ENCODE measurements at regions of chr4 and their contacts with region 1.

Region 1: DNA sequence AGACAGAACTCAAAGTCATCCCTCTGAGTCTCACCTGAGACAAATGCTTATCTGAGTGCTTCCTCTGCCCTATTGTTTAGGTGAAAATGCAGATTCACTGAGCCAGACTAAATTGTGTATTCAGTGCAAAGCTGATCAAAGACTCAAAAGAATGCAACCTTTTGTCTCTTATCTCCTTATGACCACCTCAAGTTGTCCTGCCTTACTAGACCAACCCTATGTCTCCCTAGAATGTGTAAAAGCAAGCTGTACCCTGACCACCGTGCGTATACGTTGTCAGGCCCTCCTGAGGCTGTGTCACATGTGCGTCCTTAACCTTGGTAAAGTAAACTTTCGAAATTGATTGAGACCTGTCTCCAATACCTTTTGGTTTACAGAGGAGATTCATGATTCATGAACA is 63.6 kb upstream of the SH3RF1 start:
- DNase-seq: peak; percentile 46 to 57
- H3K4me3 ChIP-seq: no peak overlapping the region
- H3K4me3 Mint-ChIP-seq: no peak overlapping the region
- H3K27ac Mint-ChIP-seq: peak overlapping the region; percentile 24
- H3K4me1 ChIP-seq: peaks cover 21% of the 10 kb centered on the region
- H3K4me1 Mint-ChIP-seq: peaks cover 32% of the 10 kb centered on the region
- H3K27me3 ChIP-seq: no peaks in the 10 kb centered on the region
- H3K27me3 Mint-ChIP-seq: no peaks in the 10 kb centered on the region
- CTCF ChIP-seq: no peak

Region 2: GRCh38 chr4:169225058-169225751 is 109.1 kb before region 1 on chr4:
- CTCF ChIA-PET with region 1: no interaction called
- POLR2A ChIA-PET with region 1: no interaction called
- intact Hi-C with region 1: no loop called
- DNase-seq: no peak
- H3K4me3 ChIP-seq: no peak overlapping the region
- H3K4me3 Mint-ChIP-seq: no peak overlapping the region
- H3K27ac Mint-ChIP-seq: no peak overlapping the region
- H3K4me1 ChIP-seq: peaks cover 16% of the 10 kb centered on the region
- H3K4me1 Mint-ChIP-seq: peaks cover 6% of the 10 kb centered on the region
- H3K27me3 ChIP-seq: no peaks in the 10 kb centered on the region
- H3K27me3 Mint-ChIP-seq: no peaks in the 10 kb centered on the region
- CTCF ChIP-seq: no peak

Region 3: GRCh38 chr4:169293343-169294176 is 40.8 kb before region 1 on chr4:
- CTCF ChIA-PET with region 1: no interaction called
- POLR2A ChIA-PET with region 1: no interaction called
- intact Hi-C with region 1: no loop called
- DNase-seq: no peak
- H3K4me3 ChIP-seq: no peak overlapping the region
- H3K4me3 Mint-ChIP-seq: no peak overlapping the region
- H3K27ac Mint-ChIP-seq: no peak overlapping the region
- H3K4me1 ChIP-seq: peaks cover 12% of the 10 kb centered on the region
- H3K4me1 Mint-ChIP-seq: peaks cover 12% of the 10 kb centered on the region
- H3K27me3 ChIP-seq: no peaks in the 10 kb centered on the region
- H3K27me3 Mint-ChIP-seq: no peaks in the 10 kb centered on the region
- CTCF ChIP-seq: no peak

Region 4: DNA sequence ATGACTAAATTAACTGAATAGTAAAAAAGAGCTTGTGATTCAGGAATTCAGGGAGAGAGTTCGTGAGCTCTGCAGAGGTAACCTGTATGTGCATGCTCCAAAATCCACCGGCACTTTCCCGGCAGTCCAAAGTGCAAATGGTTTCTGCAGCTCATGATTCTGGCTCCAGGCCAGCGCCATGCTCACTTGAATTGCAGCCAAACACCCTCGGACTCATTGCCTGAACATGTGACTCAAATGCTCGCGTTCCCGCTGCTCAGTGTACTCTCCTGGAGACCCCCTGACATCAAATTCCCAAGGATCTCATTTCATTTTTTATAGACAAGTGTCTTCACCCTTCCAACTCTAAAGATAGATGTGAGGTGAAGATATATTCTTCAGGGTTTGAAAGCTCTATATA is 19.4 kb before region 1 on chr4:
- CTCF ChIA-PET with region 1: interaction called, 3 read pairs
- POLR2A ChIA-PET with region 1: no interaction called
- intact Hi-C with region 1: loop called (anchors 1 kb)
- DNase-seq: peak; percentile 53 to 77
- H3K4me3 ChIP-seq: no peak overlapping the region
- H3K4me3 Mint-ChIP-seq: peak overlapping the region; percentile 46
- H3K27ac Mint-ChIP-seq: peak overlapping the region; percentile 50
- H3K4me1 ChIP-seq: peaks cover 26% of the 10 kb centered on the region
- H3K4me1 Mint-ChIP-seq: peaks cover 14% of the 10 kb centered on the region
- H3K27me3 ChIP-seq: no peaks in the 10 kb centered on the region
- H3K27me3 Mint-ChIP-seq: no peaks in the 10 kb centered on the region
- CTCF ChIP-seq: no peak